ENCODE measurements at regions of chr5 and their contacts with region 1.

Region 1: DNA sequence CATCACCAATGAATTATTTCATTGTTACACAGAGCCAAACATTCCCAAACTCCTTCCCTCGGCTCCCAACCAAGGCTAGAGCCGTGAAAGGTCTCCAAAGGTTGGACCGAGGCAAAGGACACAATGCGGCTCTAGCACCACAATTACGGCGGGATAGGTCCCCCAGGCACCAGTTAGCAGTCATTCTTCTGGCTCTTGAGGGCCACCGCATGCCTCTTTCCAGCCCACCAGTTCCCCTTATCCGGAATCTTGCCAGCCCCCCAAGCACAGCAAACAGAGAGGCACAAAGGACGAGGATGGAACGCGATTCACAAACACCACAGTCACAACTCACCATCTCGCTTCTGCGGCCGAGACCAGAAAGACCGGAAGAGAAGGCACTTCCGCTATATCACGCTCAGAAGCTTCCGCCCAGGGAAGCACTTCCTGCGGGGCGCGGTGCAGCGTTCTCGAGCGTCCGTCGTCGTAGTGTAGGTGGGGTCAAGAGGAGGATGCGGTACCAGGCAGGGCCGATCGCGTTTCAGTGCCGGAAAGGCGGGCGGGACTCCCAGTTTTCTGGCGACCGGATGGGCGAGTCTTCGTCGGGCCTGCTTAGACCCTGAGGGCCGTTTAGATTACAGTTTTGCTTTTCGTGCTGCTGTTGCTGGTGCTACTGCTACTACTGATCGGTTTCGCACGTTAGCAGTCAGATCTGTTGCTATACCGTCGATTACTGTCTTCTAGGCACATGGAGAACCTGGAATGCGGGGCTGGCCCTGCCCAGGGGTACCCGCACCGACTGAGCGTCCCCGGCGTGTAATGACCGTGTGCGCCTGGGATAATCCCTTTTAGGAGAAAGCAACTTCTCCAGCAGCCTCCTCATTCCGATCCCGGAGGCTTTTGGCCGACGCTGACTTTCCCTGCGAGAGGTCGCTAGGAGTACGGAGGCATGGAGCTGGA is at the start of gene RPL37:
- DNase-seq: peak; percentile 88 to 97 (median 96)
- H3K4me3 ChIP-seq: peak within 1 kb of the TSS; percentile 50 to 96 (median 81)
- H3K27ac ChIP-seq: peak within 1 kb of the TSS; percentile 84 to 99 (median 97)
- H3K27me3 ChIP-seq: no peaks in the 10 kb centered on the region
- CTCF ChIP-seq: peak in 44 of 56 donors; percentile 5 to 57 (median 37)
- total RNA-seq, gene RPL37: 346 to 612 (median 431) TPM

Region 2: GRCh38 chr5:39148983-39149534 is 1686.1 kb before region 1 on chr5:
- intact Hi-C with region 1: loop called in 1 of 2 experiments (anchors 10 kb)
- DNase-seq: no peak
- H3K4me3 ChIP-seq: no peak overlapping the region
- H3K27ac ChIP-seq: peak overlapping the region in 33 of 59 donors; percentile 1 to 78 (median 39)
- H3K27me3 ChIP-seq: peaks cover 0 to 5% (median 0%) of the 10 kb centered on the region in 45 donors
- CTCF ChIP-seq: peak in 55 of 56 donors; percentile 39 to 79 (median 59)

Region 3: GRCh38 chr5:40755407-40756365 is 79.4 kb before region 1 on chr5 and contains the start of gene TTC33:
- intact Hi-C with region 1: loop called (anchors 1 to 2 kb)
- DNase-seq: peak; percentile 96 to 99 (median 97)
- H3K4me3 ChIP-seq: peak within 1 kb of the TSS; percentile 63 to 98 (median 89)
- H3K27ac ChIP-seq: peak within 1 kb of the TSS; percentile 19 to 96 (median 91)
- H3K27me3 ChIP-seq: no peaks in the 10 kb centered on the region
- CTCF ChIP-seq: peak; percentile 46 to 95 (median 86)
- total RNA-seq, gene TTC33: 14.3 to 56.7 (median 40.2) TPM

Region 4: GRCh38 chr5:40798012-40798855 is 36.9 kb before region 1 on chr5 and contains the start of gene PRKAA1:
- intact Hi-C with region 1: loop called (anchors 1 kb)
- DNase-seq: peak; percentile 80 to 92 (median 86)
- H3K4me3 ChIP-seq: peak within 1 kb of the TSS; percentile 69 to 100 (median 94)
- H3K27ac ChIP-seq: peak within 1 kb of the TSS; percentile 75 to 98 (median 95)
- H3K27me3 ChIP-seq: no peaks in the 10 kb centered on the region
- CTCF ChIP-seq: peak in 54 of 56 donors; percentile 38 to 89 (median 68)
- total RNA-seq, gene PRKAA1: 30.2 to 83.2 (median 52.4) TPM

Region 5: DNA sequence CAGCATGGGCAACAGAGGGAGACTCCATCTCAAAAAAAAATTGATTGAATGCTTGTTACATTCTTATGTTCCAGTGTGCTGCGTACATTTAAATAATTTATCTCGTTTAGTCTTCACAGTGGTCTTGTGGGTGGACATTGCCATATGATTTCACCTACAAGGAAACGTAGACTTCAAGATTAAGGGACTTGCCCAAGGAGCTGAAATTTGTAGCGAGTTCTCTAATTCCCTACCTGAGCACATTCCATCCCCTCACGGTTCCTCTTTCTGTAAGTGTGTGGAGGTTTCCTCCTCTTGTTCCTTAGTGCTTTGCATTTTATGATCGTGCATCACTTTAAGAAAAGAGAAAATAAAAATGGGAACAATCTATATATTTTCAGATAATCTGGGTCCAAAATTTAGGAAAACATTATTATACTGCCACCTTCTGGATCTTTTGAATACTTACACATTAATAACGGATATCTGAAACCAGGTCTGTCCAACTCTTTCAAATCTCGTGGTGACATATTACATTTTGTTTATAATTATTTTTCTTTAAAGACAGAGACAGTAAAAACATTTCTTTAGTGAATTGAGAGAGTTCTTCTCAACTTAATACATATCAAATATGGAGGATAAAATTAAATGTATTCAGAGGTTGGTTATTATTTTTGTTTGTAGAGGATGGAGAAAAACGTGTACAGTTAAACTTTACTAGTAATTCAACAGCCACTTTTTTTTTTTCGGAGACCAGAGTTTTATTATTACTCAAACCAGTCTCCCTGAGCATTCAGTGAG is 44.2 kb after region 1 on chr5:
- intact Hi-C with region 1: no loop called
- DNase-seq: no peak
- H3K4me3 ChIP-seq: peak overlapping the region in 16 of 59 donors; percentile 0 to 39 (median 19)
- H3K27ac ChIP-seq: no peak overlapping the region
- H3K27me3 ChIP-seq: peaks cover 0 to 2% (median 0%) of the 10 kb centered on the region in 45 donors
- CTCF ChIP-seq: peak; percentile 33 to 90 (median 68)

Region 6: DNA sequence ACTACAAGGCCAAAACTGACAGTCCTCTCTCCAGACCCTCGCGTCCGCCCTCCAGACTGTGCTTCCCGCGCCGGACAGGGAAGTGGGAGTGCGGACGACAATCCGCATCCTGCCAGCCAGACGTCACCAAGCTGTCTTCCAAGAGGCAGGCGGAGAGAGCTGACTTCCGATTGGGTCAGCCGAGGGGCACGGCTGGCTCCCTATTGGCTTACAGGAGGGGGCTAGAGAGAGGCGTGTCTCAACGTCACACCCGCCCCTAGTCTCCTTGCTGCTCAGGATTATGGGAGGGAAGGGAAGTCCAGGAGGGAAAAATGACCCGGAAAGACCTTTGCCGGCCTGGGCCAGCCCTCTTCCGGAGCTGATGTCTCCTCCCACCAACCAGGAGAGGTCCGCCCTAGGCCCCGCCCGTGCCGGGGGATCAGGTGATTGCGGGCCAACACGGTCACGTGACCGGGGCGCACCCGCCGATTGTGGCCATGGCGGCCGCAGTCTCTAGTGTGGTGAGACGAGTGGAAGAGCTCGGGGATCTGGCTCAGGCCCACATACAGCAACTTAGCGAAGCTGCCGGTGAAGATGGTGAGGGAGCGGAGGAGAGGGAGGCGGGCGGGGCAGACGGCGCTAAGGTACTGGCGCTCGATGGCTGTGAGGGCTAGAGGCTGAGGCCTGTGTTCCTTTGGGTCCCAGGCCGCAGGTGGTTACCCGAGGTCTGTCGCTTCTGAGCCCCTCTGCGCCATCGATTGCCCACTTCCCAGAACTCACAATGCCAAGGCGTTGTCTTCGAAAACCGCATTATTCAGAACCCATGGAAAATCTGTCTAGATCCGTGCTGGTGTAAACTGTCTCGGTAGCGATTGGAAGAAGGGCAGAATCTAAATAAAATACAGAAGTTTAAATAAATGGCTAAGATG is 1069.0 kb after region 1 on chr5 and contains the start of gene RIMOC1:
- intact Hi-C with region 1: loop called in 1 of 2 experiments (anchors 10 kb)
- DNase-seq: peak; percentile 98 to 100 (median 99)
- H3K4me3 ChIP-seq: peak within 1 kb of the TSS; percentile 64 to 99 (median 90)
- H3K27ac ChIP-seq: peak within 1 kb of the TSS; percentile 59 to 95 (median 91)
- H3K27me3 ChIP-seq: peaks cover 0 to 4% (median 0%) of the 10 kb centered on the region in 45 donors
- CTCF ChIP-seq: peak in 23 of 56 donors; percentile 5 to 64 (median 24)
- total RNA-seq, gene RIMOC1: 23.2 to 54.9 (median 37.9) TPM